Calu3 (cell line): ENCODE measurements at regions of chr10 and their contacts with region 1.

Region 1: DNA sequence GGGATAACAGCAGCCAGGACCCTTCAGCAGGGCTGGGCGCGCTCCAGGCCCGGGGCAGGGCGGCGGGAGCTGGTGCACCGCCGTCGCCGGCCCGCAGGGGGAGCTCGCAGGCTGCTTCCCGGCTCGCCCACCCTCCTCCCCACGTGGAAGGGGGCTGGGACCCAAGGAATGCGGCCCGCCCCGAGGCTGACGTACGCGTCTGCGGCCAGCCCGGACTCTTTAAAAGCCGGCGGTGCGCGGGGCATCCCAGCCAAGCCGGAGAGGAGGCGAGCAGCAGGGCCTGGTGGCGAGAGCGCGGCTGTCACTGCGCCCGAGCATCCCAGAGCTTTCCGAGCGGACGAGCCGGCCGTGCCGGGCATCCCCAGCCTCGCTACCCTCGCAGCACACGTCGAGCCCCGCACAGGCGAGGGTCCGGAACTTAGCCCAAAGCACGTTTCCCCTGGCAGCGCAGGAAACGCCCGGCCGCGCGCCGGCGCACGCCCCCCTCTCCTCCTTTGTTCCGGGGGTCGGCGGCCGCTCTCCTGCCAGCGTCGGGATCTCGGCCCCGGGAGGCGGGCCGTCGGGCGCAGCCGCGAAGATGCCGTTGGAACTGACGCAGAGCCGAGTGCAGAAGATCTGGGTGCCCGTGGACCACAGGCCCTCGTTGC is at the start of gene PFKFB3:
- DNase-seq: peak; percentile 99
- H3K4me3 Mint-ChIP-seq: peak within 1 kb of the TSS; percentile 84
- H3K27ac Mint-ChIP-seq: peak within 1 kb of the TSS; percentile 84
- H3K4me1 Mint-ChIP-seq: peaks cover 5% of the 10 kb centered on the region
- H3K27me3 Mint-ChIP-seq: no peaks in the 10 kb centered on the region
- CTCF ChIP-seq: peak; percentile 95
- total RNA-seq, gene PFKFB3: 273 and 293 TPM in 2 replicates

Region 2: DNA sequence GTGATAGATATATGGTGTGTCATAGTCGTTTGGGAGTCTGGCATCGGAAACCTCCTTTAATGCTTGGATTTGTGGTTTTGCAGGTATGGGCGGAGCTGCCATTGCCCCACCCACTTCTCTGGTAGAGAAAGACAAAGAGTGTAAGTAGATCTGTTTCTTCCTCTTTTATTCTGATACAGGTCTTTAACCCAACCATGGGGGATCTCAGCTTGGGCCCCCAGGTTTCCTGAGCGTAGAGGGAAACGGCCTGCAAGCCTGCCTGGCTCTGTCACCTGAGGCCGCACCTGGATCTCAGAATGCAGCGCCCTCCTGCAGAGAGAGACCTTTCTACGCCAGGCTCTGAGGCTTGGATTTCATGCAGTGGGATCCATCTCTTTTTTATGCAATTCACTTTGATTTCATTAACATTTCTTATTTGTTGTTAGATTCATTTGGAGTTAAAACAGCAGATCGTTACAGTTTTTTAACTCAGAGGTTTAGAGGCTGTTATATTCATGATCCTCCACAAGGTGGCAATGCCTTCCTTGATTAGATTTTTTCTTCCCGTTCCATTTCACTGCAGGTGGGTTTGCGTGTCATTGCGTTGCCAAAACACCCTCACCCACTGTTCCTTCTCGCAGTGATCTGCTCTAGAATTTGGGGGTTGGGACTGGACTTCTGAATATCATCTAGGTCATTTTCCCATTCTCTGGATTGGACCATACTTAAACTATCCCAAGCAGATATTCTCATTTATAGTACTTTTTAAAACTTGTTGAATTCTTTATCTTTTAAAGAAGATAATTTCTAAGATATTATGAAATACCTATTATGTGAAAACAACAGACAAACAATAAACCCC is 94.0 kb before region 1 on chr10:
- CTCF ChIA-PET with region 1: interaction called, 3 read pairs
- intact Hi-C with region 1: loop called (anchors 5 kb)
- DNase-seq: peak; percentile 27
- H3K4me3 Mint-ChIP-seq: no peak overlapping the region
- H3K27ac Mint-ChIP-seq: peak overlapping the region; percentile 60
- H3K4me1 Mint-ChIP-seq: peaks cover 14% of the 10 kb centered on the region
- H3K27me3 Mint-ChIP-seq: no peaks in the 10 kb centered on the region
- CTCF ChIP-seq: peak; percentile 42

Region 3: DNA sequence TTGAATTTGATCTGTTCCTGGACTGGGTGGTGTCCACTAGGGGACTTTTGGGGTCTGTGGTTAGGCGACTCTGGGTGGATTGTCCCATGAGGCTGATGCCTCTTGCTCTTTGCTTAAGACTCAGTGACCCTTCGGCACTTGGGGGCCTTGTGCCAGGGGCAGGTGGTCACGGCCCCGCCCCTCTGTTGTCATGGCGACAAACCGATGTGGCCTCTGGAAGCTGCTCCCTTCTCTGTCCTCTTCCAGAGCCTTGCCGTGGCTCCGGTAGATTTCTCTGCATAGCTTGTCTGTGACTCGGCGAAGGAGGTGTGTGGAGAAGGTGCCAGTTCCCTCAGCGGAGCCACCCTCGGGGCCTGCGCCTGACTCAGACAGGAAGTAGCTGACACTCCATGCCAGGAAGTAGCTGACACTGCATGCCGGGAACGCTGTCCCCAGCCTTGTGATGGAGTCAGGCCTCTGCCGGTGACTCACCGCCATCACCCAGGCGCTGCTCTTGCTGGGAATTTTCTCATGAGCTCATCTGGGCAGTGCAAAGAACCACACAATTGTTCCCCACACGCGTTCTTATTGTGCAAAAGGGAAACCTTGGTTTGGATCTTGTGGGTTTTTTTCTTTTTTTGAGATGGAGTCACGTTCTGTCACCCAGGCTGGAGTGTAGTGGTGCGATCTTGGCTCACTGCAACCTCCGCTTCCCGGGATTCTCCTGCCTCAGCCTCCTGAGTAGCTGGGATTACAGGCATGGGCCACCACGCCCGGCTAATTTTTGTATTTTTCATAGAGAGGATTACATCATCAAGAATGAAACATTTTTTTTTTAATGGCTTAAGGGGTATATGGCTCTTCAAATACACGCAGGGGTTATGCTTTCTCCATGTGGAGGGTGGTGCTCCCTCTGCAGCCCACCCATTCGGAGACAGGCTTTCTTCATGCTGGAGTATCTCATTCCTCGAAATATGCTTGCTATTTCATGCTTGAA is 72.5 kb after region 1 on chr10:
- CTCF ChIA-PET with region 1: interaction called, 11 read pairs
- intact Hi-C with region 1: loop called (anchors 5 kb)
- DNase-seq: peak; percentile 95
- H3K4me3 Mint-ChIP-seq: peak overlapping the region; percentile 65
- H3K27ac Mint-ChIP-seq: peak overlapping the region; percentile 99
- H3K4me1 Mint-ChIP-seq: peaks cover 58% of the 10 kb centered on the region
- H3K27me3 Mint-ChIP-seq: no peaks in the 10 kb centered on the region
- CTCF ChIP-seq: no peak

Region 4: DNA sequence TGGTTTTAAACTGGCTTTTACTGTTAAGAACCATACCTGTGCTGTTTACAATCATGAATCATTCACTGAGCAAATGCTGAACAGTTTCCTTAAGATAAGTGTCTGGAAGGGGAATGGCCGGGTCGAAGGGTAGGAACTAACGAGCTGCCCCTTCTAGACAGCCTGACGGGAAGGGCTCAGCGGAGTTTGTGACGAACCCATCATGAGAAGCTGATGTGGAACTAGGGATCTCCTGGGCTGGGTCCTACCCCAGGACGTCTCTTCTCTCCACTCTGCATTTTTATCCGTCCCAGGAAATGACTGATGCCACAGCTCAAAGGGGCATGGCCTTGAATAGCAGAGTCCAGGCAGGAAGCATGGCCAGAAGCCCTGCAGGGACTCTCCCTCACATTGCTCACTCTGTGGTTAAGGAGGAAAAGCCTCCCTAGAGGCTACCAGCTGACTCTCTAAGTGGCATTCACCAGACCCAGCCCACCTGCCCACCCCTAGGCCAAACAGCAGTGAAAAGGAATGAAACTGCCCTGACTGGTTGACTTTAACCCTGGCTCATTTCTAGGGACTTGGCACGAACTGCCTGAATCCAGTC is 111.9 kb after region 1 on chr10:
- CTCF ChIA-PET with region 1: interaction called, 13 read pairs
- intact Hi-C with region 1: no loop called
- DNase-seq: peak; percentile 79
- H3K4me3 Mint-ChIP-seq: peak overlapping the region; percentile 66
- H3K27ac Mint-ChIP-seq: peak overlapping the region; percentile 95
- H3K4me1 Mint-ChIP-seq: peaks cover 59% of the 10 kb centered on the region
- H3K27me3 Mint-ChIP-seq: no peaks in the 10 kb centered on the region
- CTCF ChIP-seq: no peak